ENCODE measurements at regions of chr20 and their contacts with region 1.

Region 1: DNA sequence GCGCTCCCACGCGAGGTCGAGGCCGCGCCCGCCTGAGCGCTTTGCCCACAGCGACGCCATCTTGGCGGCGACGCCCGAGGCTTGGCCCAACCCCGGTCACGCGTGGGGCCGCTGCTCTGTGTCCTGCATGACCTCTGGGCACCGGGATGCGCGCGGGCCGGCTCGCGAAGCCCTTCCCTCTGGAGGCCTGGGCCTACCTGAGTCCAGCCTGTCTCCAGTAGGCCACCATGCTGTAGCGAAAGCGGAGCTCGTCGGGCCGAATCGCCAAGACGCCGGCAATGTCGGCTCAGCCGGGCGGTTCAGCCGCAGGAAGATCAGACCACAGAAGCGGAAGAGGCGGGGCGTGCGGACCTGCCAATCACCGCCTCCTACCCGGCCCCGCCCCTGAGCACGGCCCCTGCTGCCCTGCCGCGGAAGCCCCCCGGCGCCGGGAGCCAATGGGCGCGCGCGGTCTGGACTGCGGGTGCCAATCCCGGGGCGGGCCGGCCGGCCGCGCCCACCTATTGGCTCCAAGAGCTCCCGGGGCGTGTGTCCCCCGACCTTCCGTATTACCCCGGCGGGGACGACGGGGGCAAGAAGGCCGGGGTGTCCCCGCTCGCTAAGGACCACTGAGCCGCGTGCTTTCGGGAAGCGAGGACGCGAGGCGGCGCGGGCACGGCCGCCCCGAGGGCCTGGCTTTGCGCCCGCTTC is at the start of gene ATP5F1E:
- DNase-seq: peak; percentile 96
- H3K4me3 Mint-ChIP-seq: peak within 1 kb of the TSS; percentile 90
- H3K27ac Mint-ChIP-seq: peak within 1 kb of the TSS; percentile 94
- H3K4me1 Mint-ChIP-seq: peaks cover 60% of the 10 kb centered on the region
- H3K27me3 Mint-ChIP-seq: no peaks in the 10 kb centered on the region
- total RNA-seq, gene ATP5F1E: 81.3 and 84.6 TPM in 2 replicates

Region 2: GRCh38 chr20:58420798-58421496 is 611.2 kb before region 1 on chr20:
- intact Hi-C with region 1: no loop called
- DNase-seq: no peak
- H3K4me3 Mint-ChIP-seq: no peak overlapping the region
- H3K27ac Mint-ChIP-seq: no peak overlapping the region
- H3K4me1 Mint-ChIP-seq: peaks cover 12% of the 10 kb centered on the region
- H3K27me3 Mint-ChIP-seq: no peaks in the 10 kb centered on the region

Region 3: DNA sequence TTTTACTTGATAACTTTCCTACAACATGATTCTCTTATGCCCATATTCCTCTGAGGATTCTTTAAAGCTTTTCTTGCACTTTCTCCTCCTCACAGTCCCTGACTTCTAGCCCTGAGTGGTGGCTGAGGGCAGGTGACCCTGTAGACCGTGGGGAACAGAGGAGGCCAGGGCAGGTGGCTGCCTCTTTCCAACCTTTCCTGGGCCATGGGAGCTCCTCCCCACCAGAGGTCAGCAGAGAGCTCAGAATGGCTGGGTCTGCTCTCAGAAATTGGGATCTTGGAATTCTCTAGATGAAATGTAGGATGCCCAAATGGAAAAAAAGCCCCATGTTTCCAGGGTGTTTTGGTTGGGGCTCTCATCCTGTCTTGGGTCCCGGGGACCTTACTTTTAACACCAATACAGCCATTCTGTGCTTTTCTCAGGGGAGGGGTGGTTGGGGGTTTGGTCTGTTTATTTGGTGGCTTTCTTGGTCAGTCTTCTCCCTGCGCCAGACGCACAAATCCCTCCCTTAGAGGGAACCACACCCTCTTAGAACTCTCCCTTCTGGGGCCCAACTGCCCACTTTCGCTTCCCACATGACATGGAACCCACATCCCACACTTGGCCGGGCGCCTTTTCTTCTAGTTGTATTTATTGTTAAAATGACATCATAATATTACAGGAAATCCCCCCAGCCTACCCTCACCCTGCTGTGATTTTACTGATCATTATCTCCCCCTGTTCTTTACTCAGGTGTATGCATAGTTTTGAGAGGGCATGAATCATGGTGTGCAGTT is 161.7 kb before region 1 on chr20:
- intact Hi-C with region 1: no loop called
- DNase-seq: peak; percentile 17
- H3K4me3 Mint-ChIP-seq: no peak overlapping the region
- H3K27ac Mint-ChIP-seq: no peak overlapping the region
- H3K4me1 Mint-ChIP-seq: peaks cover 4% of the 10 kb centered on the region
- H3K27me3 Mint-ChIP-seq: peaks cover 32% of the 10 kb centered on the region

Region 4: GRCh38 chr20:58888521-58889333 is 143.4 kb before region 1 on chr20:
- intact Hi-C with region 1: loop called (anchors 1 kb)
- DNase-seq: peak; percentile 79
- H3K4me3 Mint-ChIP-seq: peak overlapping the region; percentile 81
- H3K27ac Mint-ChIP-seq: peak overlapping the region; percentile 40
- H3K4me1 Mint-ChIP-seq: peaks cover 33% of the 10 kb centered on the region
- H3K27me3 Mint-ChIP-seq: no peaks in the 10 kb centered on the region

Region 5: DNA sequence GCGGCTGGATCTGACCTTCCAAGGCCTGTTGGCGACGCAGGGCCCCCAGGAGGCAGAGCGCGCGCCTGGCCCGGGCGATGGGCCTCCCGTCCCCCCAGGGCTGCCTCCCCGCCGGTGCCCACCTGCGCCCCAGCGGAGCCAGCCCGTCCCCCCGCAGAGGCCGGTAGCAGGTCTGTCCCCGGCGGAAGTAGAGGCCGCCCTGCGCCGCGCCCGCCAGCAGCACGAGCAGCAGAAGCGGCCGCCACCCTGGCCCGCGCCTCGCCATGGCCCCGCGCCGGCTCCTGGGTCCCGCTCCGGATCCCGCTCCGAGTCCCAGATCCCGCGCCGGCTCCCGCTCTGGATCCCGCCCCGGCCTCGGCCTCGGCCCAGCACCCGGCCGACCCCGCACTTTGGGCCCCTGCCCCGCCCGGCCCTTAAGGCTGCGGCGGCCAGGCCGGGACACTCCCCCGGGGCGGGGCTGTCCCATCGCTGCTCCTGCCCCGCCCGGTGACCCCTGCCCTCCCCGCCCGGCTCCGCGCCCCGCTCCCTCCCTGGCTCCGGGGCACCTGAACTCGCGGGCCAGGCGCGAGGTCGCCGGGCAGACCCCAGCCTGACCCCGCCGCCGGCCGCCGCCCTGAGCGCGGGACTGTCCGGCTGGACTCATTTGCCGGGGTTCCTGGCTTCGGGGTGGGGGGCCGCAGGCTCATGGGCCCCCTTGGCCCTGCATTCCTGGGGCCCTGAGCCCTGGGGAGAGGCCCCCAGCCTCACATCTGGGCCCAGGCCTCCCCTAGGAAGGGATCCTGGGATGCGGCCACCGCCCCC is 25.1 kb before region 1 on chr20 and contains the start of gene CTSZ:
- intact Hi-C with region 1: loop called (anchors 1 kb)
- DNase-seq: peak; percentile 33
- H3K4me3 Mint-ChIP-seq: peak within 1 kb of the TSS; percentile 85
- H3K27ac Mint-ChIP-seq: peak within 1 kb of the TSS; percentile 83
- H3K4me1 Mint-ChIP-seq: peaks cover 47% of the 10 kb centered on the region
- H3K27me3 Mint-ChIP-seq: no peaks in the 10 kb centered on the region
- total RNA-seq, gene CTSZ: 46.4 and 54.1 TPM in 2 replicates

Region 6: GRCh38 chr20:59042796-59043660 is 10.9 kb after region 1 on chr20:
- intact Hi-C with region 1: loop called (anchors 1 kb)
- DNase-seq: peak; percentile 94
- H3K4me3 Mint-ChIP-seq: peak overlapping the region; percentile 93
- H3K27ac Mint-ChIP-seq: peak overlapping the region; percentile 94
- H3K4me1 Mint-ChIP-seq: peaks cover 44% of the 10 kb centered on the region
- H3K27me3 Mint-ChIP-seq: no peaks in the 10 kb centered on the region

Region 7: GRCh38 chr20:59165891-59166709 is 133.9 kb after region 1 on chr20:
- intact Hi-C with region 1: loop called (anchors 1 kb)
- DNase-seq: no peak
- H3K4me3 Mint-ChIP-seq: peak overlapping the region; percentile 88
- H3K27ac Mint-ChIP-seq: peak overlapping the region; percentile 98
- H3K4me1 Mint-ChIP-seq: peaks cover 88% of the 10 kb centered on the region
- H3K27me3 Mint-ChIP-seq: no peaks in the 10 kb centered on the region

Region 8: GRCh38 chr20:60820918-60821317 is 1788.8 kb after region 1 on chr20:
- intact Hi-C with region 1: no loop called
- DNase-seq: no peak
- H3K4me3 Mint-ChIP-seq: no peak overlapping the region
- H3K27ac Mint-ChIP-seq: no peak overlapping the region
- H3K4me1 Mint-ChIP-seq: peaks cover 4% of the 10 kb centered on the region
- H3K27me3 Mint-ChIP-seq: peaks cover 11% of the 10 kb centered on the region